GM10248 (cell line): ENCODE measurements at regions of chr12 and their contacts with region 1.

Region 1: DNA sequence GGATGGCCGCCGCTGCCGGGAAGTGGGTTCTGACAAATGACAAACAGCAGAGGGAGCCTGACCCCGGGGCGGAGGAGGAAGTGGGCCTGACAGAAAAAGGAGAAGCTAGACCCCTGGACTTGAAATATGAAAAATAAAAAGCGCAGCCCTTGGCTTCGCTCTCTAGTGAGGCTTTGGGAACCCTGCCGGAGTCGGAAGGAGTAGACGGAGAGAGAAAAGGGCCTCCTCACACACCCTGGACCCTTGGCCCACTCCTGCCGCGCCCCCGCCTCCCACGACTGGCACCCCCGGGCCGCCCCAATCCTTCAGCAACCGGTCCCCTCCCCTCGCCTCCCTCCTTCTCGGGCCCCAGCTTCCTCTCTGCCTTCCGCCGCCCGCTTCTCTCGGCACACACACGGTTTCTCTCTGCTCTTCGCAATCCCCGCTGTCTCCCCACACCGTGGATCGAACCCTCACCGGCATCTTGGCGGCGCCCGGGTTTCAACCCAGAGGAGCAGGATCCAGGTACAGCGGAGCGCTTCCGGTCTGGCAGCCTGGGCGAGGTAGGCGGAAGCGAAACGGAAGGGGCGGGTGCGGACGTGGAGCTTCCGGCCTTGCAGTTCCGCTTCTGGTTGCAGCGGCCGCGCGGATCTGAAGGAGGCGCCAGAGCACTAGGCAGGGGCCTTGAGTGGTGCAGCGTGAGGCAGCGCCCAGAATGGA is at the start of gene ARPC3:
- DNase-seq: peak; percentile 93
- CTCF ChIP-seq: peak; percentile 99

Region 2: GRCh38 chr12:110338754-110339153 is 111.2 kb before region 1 on chr12:
- CTCF ChIA-PET with region 1: no interaction called
- POLR2A ChIA-PET with region 1: no interaction called
- DNase-seq: peak; percentile 33
- CTCF ChIP-seq: no peak

Region 3: DNA sequence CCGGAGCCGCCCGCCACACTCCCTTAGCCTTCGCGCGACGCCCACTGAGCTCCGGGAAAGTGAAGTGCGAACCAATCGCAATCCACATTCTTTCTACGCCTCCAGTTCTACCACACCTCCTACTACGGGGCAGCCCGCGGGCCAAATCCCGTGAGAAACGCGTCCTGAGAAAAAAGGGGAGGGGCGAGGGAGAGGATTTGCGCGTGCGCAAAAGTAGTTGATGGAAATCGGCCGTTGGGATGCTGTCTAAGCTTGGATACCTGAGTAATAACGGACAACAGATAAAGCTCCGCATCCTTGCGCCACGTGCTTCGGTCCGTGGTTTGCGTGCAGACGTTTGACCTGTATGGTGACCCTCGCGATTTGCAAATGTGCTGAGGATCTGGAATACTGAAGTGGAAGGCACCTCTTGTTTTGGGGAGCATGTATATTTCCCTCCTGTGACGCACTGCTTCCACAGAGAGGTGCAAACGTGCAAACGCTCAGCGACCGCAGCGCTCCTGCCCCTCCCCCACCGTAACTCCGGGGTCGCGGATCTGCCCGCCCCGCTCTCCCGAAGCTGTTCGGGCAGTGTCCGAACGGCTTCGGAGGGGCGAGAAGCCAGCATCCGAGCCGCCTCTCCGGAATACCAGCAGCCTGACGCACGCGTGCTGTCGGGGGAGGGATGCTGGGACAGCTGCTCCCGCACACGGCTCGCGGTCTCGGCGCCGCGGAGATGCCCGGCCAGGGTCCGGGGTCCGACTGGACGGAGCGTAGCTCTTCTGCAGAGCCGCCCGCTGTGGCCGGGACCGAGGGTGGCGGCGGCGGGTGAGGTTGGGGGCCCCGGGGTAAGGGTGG is 18.5 kb after region 1 on chr12 and contains the starts of genes FAM216A and GPN3:
- CTCF ChIA-PET with region 1: interaction called, 58 read pairs
- POLR2A ChIA-PET with region 1: interaction called, 3 read pairs
- DNase-seq: peak; percentile 96
- CTCF ChIP-seq: no peak

Region 4: DNA sequence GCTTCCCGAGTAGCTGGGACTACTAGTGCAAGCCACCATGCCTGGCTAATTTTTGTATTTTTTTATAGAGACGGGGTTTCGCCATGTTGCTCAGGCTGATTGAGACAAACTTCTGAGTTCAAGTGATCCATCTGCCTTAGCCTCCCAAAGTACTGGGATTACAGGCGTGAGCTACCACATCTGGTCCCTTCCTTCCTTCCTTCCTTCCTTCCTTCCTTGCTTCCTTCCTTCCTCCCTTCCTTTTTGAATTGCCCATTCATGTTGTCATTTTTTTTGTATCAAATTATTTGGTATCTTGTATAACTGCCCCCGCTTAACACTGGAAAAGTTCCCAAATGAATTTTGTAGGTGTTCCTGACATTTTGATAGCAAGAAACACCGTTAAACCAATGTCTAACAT is 63.9 kb after region 1 on chr12:
- CTCF ChIA-PET with region 1: interaction called, 10 read pairs
- POLR2A ChIA-PET with region 1: no interaction called
- DNase-seq: no peak
- CTCF ChIP-seq: no peak

Region 5: GRCh38 chr12:110613771-110614684 is 164.1 kb after region 1 on chr12 and contains the start of gene TCTN1:
- CTCF ChIA-PET with region 1: interaction called, 13 read pairs
- POLR2A ChIA-PET with region 1: no interaction called
- DNase-seq: peak; percentile 97
- CTCF ChIP-seq: no peak

Region 6: DNA sequence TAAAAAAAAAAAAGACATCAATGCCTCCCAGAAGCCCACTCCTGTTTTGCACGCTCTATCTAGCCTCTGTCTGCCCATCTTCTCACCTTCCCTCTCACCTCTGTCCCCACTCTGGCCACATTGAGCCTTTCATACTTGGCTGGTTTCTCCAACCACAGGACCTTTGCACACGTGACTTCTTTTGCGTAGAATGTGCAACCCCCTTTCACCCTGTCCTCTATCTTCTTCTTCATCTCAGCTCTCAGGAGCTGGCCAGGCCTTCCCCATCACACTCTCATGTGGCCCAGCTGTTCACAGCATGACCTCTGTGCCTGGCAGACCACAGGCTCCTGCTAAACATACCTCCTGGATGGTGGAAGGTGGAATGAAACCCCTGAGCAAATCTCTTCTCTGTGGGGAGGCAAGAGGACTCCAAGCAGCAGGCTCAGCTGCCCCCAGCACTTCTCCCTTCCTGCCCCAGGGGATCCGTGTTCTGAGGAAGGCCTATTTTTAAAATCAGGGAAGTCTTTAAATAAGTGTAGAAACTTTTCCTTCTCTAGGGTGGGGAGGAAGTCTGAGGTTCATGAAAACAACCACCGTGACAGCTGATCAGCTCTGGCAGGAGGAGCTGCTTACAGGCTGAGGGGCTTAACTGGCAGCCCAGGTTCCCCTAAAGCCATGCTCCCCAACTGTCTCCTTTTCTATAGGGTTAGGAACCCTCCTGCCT is 227.4 kb after region 1 on chr12:
- CTCF ChIA-PET with region 1: interaction called, 13 read pairs
- POLR2A ChIA-PET with region 1: no interaction called
- DNase-seq: peak; percentile 77
- CTCF ChIP-seq: no peak